Psoas muscle (tissue), 8 donors: ENCODE measurements at regions of chr6 and their contacts with region 1.

Region 1: DNA sequence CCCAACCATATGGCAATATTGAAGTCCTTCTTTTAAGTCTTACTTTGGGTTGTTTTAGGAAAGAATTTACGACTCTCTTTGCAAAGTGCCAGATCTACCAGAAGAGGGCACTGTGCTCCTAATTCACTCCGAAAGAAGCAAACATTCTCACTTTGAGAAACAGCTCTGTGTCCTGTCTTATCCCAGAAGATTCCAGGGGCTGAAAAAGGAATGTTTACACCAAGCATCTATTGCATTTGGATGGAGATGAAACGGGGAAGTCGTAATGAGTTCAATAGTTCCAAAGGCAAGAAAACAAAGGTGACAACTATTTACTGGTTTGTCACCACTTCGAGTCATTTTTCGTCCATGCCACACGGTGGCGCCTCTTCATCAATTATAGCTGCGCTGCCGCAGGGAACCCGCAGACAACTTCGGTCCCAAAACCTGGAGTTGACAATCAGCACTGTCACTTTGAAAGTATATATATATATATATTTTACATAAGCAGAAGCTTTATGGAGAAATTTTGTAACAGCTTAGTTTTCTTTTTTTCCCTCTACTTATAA is 121.6 kb downstream of the MOXD1 start:
- DNase-seq: peak; percentile 70 to 81
- ATAC-seq: peak; percentile 73 to 95 (median 85)
- H3K4me3 ChIP-seq: peak overlapping the region; percentile 61
- H3K27ac ChIP-seq: no peak overlapping the region
- H3K4me1 ChIP-seq: no peaks in the 10 kb centered on the region
- H3K27me3 ChIP-seq: peaks cover 0 to 2% (median 0%) of the 10 kb centered on the region in 3 donors
- CTCF ChIP-seq: peak; percentile 84

Region 2: DNA sequence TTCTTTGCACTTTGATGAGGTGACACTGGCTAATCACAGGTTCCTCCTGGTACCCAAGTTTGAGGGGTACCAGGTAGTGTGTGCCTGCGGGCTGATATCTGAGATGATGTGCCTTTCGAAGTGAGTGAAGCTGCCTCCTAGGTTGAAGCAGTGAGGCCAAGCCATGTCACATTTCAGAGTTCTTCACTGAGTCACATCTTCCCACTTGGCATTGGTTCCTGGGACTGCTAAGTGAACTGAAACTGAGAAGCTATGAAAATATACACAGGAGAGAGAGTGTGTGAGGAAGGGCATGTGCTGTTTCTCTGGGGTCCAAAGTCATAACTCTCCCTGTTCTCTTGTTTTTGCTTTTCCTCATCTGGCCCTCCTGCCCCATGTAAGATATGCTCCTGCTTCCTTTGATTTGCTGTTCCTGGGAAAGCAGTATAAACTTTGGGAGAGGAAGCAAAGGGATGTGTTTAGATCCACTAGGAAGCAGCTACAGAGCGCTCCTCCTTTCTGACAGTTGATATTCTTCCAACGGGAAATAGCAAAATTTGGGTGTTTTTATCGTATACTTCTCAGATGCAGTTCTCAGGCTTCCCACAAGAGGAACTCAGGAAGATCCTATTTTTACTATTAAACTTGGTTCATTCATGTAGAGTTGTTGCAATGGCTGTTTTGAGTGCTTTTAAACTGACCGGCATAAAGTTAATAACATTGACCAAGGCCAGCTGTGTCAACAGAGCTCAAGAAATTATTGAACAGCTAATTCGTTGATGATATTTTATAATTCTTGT is 32.1 kb before region 1 on chr6:
- intact Hi-C with region 1: no loop called
- DNase-seq: no peak
- ATAC-seq: no peak
- H3K4me3 ChIP-seq: no peak overlapping the region
- H3K27ac ChIP-seq: no peak overlapping the region
- H3K4me1 ChIP-seq: no peaks in the 10 kb centered on the region
- H3K27me3 ChIP-seq: no peaks in the 10 kb centered on the region
- CTCF ChIP-seq: no peak

Region 3: GRCh38 chr6:132300323-132300949 is 20.8 kb after region 1 on chr6:
- intact Hi-C with region 1: loop called in 1 of 2 experiments (anchors 1 kb)
- DNase-seq: no peak
- ATAC-seq: peak in 1 of 4 donors; percentile 54
- H3K4me3 ChIP-seq: no peak overlapping the region
- H3K27ac ChIP-seq: no peak overlapping the region
- H3K4me1 ChIP-seq: no peaks in the 10 kb centered on the region
- H3K27me3 ChIP-seq: no peaks in the 10 kb centered on the region
- CTCF ChIP-seq: peak; percentile 45